OCI-LY7 (cell line): ENCODE measurements at regions of chr18 and their contacts with region 1.

Region 1: DNA sequence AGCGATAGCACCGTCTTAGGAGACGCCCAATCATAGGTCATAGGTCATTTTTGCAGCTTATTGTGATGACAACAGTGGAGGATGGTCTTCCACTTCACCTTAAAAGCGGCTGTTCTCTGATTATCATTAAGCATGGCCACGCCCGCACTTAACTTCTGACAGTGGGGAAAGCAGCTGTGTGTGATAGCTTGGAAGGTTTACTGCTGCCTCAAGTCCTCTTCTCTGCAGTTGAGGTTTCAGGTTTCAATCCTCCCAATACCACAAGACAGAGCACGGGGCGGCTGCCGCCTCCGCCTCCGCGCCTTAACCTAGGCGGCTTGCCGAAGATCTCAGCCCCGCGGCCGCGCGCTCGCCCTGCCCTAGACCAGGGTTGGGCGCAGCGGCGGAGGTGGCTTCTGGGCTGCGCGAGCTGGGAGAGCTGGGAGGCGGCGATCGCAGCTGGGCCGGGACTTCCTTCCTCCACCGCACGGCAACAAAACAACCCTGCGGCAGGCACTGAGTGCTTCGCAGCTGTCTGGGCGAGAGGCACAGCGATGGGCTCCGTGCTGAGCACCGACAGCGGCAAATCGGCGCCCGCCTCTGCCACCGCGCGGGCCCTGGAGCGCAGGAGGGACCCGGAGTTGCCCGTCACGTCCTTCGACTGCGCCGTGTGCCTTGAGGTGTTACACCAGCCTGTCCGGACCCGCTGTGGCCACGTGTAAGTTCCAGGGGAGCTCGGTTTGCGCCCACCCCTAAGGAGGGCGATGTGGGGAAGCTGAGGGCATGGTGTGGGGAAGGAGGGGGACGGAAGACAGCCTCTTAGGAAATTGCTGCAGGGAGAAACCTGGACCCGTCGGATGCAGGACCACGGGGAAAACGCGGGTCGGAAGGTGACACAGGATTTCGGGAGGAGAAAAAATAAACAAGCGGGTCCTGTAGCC is at the start of gene RNF125:
- DNase-seq: peak; percentile 82
- H3K4me3 ChIP-seq: peak within 1 kb of the TSS; percentile 76
- H3K27ac ChIP-seq: peak within 1 kb of the TSS; percentile 81
- H3K4me1 ChIP-seq: peaks cover 5% of the 10 kb centered on the region
- CTCF ChIP-seq: 0 out of 2 replicates have a peak, but pooled peaks have one; percentile 13
- total RNA-seq, gene RNF125: 1.2 TPM in 2 replicates

Region 2: DNA sequence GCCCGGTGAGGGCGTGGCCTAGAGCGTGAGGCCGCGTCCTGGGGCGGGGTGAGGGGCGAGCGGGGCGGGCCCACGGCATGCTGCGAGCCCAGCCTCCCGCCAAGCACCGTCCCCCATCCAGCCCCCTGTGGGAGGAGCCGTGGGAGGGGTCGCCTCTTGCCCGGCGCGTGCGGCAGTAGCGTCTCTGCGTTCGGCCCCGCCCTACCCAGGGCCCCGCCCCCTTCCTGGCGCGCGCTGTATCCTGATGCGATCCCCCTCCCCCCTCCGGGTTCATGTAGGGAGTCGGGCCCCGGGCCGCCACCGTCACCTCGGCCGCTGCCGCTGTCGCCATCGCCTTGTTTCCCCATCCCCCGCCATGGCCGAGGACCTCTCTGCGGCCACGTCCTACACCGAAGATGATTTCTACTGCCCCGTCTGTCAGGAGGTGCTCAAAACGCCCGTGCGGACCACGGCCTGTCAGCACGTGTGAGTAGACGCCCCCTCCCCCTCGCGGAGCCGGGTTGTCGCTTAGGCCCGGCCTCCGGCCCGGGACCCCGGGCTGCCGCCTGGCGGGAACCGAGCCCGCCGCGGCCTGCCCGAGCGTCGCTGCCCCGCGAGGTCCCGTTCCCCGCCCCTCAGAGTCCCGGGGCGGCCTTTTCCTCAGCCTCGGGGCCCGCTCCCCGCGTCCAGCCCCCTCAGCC is 74.0 kb after region 1 on chr18:
- CTCF ChIA-PET with region 1: no interaction called
- POLR2A ChIA-PET with region 1: interaction called, 5 read pairs
- intact Hi-C with region 1: loop called (anchors 1 kb)
- DNase-seq: peak; percentile 91
- H3K4me3 ChIP-seq: peak overlapping the region; percentile 96
- H3K27ac ChIP-seq: peak overlapping the region; percentile 97
- H3K4me1 ChIP-seq: peaks cover 25% of the 10 kb centered on the region
- CTCF ChIP-seq: no peak